Endothelial cell of umbilical vein (primary cell): ENCODE measurements at regions of chr6 and their contacts with region 1.

Region 1: GRCh38 chr6:80457439-80457933 is 351.0 kb downstream of the BCKDHB start:
- DNase-seq: peak; percentile 94
- H3K4me3 ChIP-seq: no peak overlapping the region
- H3K27ac ChIP-seq: no peak overlapping the region
- H3K4me1 ChIP-seq: peaks cover 58% of the 10 kb centered on the region
- H3K27me3 ChIP-seq: no peaks in the 10 kb centered on the region
- CTCF ChIP-seq: peak in 1 of 2 donors; percentile 31
- POLR2A ChIP-seq: no peak

Region 2: DNA sequence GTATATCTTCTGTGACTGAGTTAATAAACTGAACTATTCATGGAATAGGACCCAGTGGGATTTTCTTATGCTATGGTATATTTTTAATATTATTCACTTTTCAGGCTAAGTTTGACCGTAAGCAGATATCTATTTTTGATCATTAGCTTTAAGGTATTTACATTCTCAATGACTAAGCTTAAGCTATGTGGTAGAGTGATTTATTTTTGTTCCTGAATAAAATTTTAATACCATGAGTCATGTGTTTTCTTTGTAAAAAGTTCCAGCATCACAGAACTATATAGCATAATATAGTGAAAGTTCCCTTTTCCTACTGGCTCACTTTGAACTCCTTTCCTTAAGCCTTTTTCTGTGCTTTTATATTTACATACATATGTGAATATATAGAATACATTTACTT is 275.2 kb before region 1 on chr6:
- CTCF ChIA-PET with region 1: no interaction called
- POLR2A ChIA-PET with region 1: no interaction called
- dilution Hi-C with region 1: no loop called
- intact Hi-C with region 1: loop called (anchors 2 kb)
- DNase-seq: peak; percentile 75
- H3K4me3 ChIP-seq: no peak overlapping the region
- H3K27ac ChIP-seq: peak overlapping the region; percentile 87
- H3K4me1 ChIP-seq: peaks cover 32% of the 10 kb centered on the region
- H3K27me3 ChIP-seq: no peaks in the 10 kb centered on the region
- CTCF ChIP-seq: no peak
- POLR2A ChIP-seq: no peak

Region 3: DNA sequence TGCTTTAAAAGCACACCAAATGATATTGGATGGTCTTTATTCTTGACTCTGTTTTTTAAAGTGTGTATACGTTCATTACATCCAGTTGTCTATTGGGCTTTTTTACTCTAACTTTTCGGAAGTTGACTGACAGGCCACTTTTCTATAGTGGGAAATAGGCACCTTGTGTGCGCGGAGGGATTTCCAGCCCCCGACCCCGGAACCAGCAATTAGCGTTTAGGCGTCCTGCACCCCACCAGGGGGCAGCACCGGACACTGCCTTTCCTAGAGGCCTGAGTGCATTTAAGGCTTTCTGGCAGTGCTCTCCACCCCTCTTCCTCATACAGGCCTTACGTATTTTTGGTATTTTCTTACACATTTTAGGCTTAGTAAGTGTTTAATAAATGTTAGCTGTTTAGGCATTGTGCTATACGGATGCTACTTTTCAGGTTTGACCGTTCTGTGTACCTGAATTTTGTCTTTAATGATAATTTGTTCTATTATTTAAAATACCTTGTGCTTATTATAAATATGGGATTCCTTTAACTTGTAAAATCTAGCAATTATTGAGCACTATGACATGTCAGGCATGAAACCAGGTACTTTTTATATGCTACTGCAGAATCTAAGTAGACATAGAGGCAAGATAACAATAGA is 119.2 kb before region 1 on chr6:
- CTCF ChIA-PET with region 1: no interaction called
- POLR2A ChIA-PET with region 1: no interaction called
- dilution Hi-C with region 1: no loop called
- intact Hi-C with region 1: loop called (anchors 2 kb)
- DNase-seq: peak; percentile 31
- H3K4me3 ChIP-seq: no peak overlapping the region
- H3K27ac ChIP-seq: no peak overlapping the region
- H3K4me1 ChIP-seq: peaks cover 4% of the 10 kb centered on the region
- H3K27me3 ChIP-seq: no peaks in the 10 kb centered on the region
- CTCF ChIP-seq: peak; percentile 64 to 69
- POLR2A ChIP-seq: no peak

Region 4: GRCh38 chr6:80501636-80502035 is 44.1 kb after region 1 on chr6:
- CTCF ChIA-PET with region 1: no interaction called
- POLR2A ChIA-PET with region 1: no interaction called
- dilution Hi-C with region 1: no loop called
- intact Hi-C with region 1: no loop called
- DNase-seq: no peak
- H3K4me3 ChIP-seq: no peak overlapping the region
- H3K27ac ChIP-seq: no peak overlapping the region
- H3K4me1 ChIP-seq: no peaks in the 10 kb centered on the region
- H3K27me3 ChIP-seq: no peaks in the 10 kb centered on the region
- CTCF ChIP-seq: no peak
- POLR2A ChIP-seq: no peak

Region 5: GRCh38 chr6:80638213-80639055 is 180.9 kb after region 1 on chr6:
- CTCF ChIA-PET with region 1: no interaction called
- POLR2A ChIA-PET with region 1: no interaction called
- dilution Hi-C with region 1: no loop called
- intact Hi-C with region 1: loop called (anchors 1 kb)
- DNase-seq: peak; percentile 97
- H3K4me3 ChIP-seq: no peak overlapping the region
- H3K27ac ChIP-seq: peak overlapping the region; percentile 94
- H3K4me1 ChIP-seq: peaks cover 17% of the 10 kb centered on the region
- H3K27me3 ChIP-seq: no peaks in the 10 kb centered on the region
- CTCF ChIP-seq: no peak
- POLR2A ChIP-seq: peak; percentile 47

Region 6: GRCh38 chr6:80767808-80768207 is 310.3 kb after region 1 on chr6:
- CTCF ChIA-PET with region 1: no interaction called
- POLR2A ChIA-PET with region 1: no interaction called
- dilution Hi-C with region 1: no loop called
- intact Hi-C with region 1: no loop called
- DNase-seq: no peak
- H3K4me3 ChIP-seq: no peak overlapping the region
- H3K27ac ChIP-seq: no peak overlapping the region
- H3K4me1 ChIP-seq: no peaks in the 10 kb centered on the region
- H3K27me3 ChIP-seq: no peaks in the 10 kb centered on the region
- CTCF ChIP-seq: no peak
- POLR2A ChIP-seq: no peak

Region 7: DNA sequence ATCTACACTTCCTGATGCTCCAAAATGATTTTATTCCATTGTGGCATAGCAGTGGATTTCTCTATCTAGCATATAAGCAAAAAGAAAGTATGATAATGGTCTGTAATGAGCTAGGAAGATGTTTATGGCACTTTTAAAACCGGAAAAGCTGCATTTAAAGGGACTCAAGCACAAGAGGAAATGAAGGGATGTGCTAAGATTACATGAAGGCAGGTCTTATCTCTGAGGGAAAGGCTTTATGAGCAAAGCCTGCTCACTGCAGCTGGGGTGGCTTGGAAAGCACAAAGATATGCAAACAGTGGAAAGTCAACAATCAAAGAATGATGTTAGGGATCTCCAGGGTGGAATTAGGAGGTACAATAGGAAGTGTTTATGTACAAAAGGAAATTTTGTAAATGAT is 1156.8 kb after region 1 on chr6:
- CTCF ChIA-PET with region 1: no interaction called
- POLR2A ChIA-PET with region 1: no interaction called
- dilution Hi-C with region 1: no loop called
- intact Hi-C with region 1: loop called (anchors 2 kb)
- DNase-seq: peak; percentile 77
- H3K4me3 ChIP-seq: peak overlapping the region in 1 of 3 experiments; percentile 8
- H3K27ac ChIP-seq: peak overlapping the region; percentile 76
- H3K4me1 ChIP-seq: peaks cover 22% of the 10 kb centered on the region
- H3K27me3 ChIP-seq: no peaks in the 10 kb centered on the region
- CTCF ChIP-seq: no peak
- POLR2A ChIP-seq: no peak

Region 8: GRCh38 chr6:81865712-81866111 is 1408.2 kb after region 1 on chr6:
- CTCF ChIA-PET with region 1: no interaction called
- POLR2A ChIA-PET with region 1: no interaction called
- dilution Hi-C with region 1: no loop called
- intact Hi-C with region 1: loop called (anchors 10 kb)
- DNase-seq: peak; percentile 88
- H3K4me3 ChIP-seq: no peak overlapping the region
- H3K27ac ChIP-seq: peak overlapping the region; percentile 59
- H3K4me1 ChIP-seq: peaks cover 27% of the 10 kb centered on the region
- H3K27me3 ChIP-seq: no peaks in the 10 kb centered on the region
- CTCF ChIP-seq: no peak
- POLR2A ChIP-seq: no peak